HCT116 (cell line): ENCODE measurements at regions of chr4 and their contacts with region 1.

Region 1: GRCh38 chr4:77075869-77076799 is at the start of gene CCNI:
- DNase-seq: peak; percentile 95
- ATAC-seq: peak; percentile 84
- H3K4me3 ChIP-seq: peak within 1 kb of the TSS; percentile 78 to 80
- H3K27ac ChIP-seq: peak within 1 kb of the TSS; percentile 72
- H3K4me1 ChIP-seq: peaks cover 14 to 21% of the 10 kb centered on the region in 2 experiments
- H3K27me3 ChIP-seq: no peaks in the 10 kb centered on the region
- CTCF ChIP-seq: no peak
- POLR2A ChIP-seq: peak; percentile 95
- RAD21 ChIP-seq: no peak
- total RNA-seq, gene CCNI: 208 TPM

Region 2: GRCh38 chr4:77007358-77008191 is 68.6 kb before region 1 on chr4:
- CTCF ChIA-PET with region 1: no interaction called
- POLR2A ChIA-PET with region 1: no interaction called
- RAD21 ChIA-PET with region 1: no interaction called
- intact Hi-C with region 1: no loop called
- DNase-seq: no peak
- ATAC-seq: no peak
- H3K4me3 ChIP-seq: no peak overlapping the region
- H3K27ac ChIP-seq: no peak overlapping the region
- H3K4me1 ChIP-seq: no peaks in the 10 kb centered on the region
- H3K27me3 ChIP-seq: no peaks in the 10 kb centered on the region
- CTCF ChIP-seq: no peak
- POLR2A ChIP-seq: no peak
- RAD21 ChIP-seq: no peak

Region 3: DNA sequence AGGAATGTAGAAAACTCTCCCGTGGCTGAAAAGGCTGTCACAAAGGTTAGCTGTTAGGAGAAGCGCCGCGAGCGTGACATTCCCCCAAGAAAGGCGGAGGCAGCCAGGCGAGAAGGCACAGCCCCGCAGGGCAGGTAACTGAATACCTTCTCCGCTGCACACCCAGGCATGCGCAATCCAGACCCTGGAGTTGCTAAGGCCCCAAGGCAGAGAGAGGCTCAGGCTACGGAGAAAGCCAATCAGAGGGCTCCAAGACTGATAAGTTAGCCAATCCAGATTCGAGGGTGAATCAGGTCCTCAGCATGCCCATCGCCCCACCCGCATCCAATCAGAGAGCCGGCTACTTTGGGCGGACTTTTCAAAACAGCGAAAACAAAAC is 80.4 kb after region 1 on chr4:
- CTCF ChIA-PET with region 1: no interaction called
- POLR2A ChIA-PET with region 1: no interaction called
- RAD21 ChIA-PET with region 1: no interaction called
- intact Hi-C with region 1: loop called (anchors 1 kb)
- DNase-seq: peak; percentile 100
- ATAC-seq: peak; percentile 92
- H3K4me3 ChIP-seq: peak overlapping the region; percentile 77 to 90
- H3K27ac ChIP-seq: peak overlapping the region; percentile 83
- H3K4me1 ChIP-seq: peaks cover 11 to 16% of the 10 kb centered on the region in 2 experiments; a peak in 3 of 4 replicates
- H3K27me3 ChIP-seq: no peaks in the 10 kb centered on the region
- CTCF ChIP-seq: no peak
- POLR2A ChIP-seq: peak; percentile 74
- RAD21 ChIP-seq: no peak